ENCODE measurements at regions of chr11 and their contacts with region 1.

Region 1: GRCh38 chr11:71086675-71087258 is 165.6 kb downstream of the SHANK2 start:
- DNase-seq: peak; percentile 76
- ATAC-seq: peak; percentile 93
- H3K4me3 Mint-ChIP-seq: no peak overlapping the region
- H3K27ac Mint-ChIP-seq: peak overlapping the region; percentile 45; the same call in 1 of the 2 replicates
- H3K4me1 Mint-ChIP-seq: no peaks in the 10 kb centered on the region
- H3K27me3 Mint-ChIP-seq: no peaks in the 10 kb centered on the region
- CTCF ChIP-seq: no peak; the same call in 1 of the 2 replicates

Region 2: GRCh38 chr11:71170676-71171423 is 84.1 kb after region 1 on chr11:
- CTCF ChIA-PET with region 1: no interaction called
- POLR2A ChIA-PET with region 1: no interaction called
- DNase-seq: no peak
- ATAC-seq: no peak
- H3K4me3 Mint-ChIP-seq: no peak overlapping the region
- H3K27ac Mint-ChIP-seq: no peak overlapping the region; the same call in 1 of the 2 replicates
- H3K4me1 Mint-ChIP-seq: peaks cover 34% of the 10 kb centered on the region
- H3K27me3 Mint-ChIP-seq: no peaks in the 10 kb centered on the region
- CTCF ChIP-seq: no peak

Region 3: DNA sequence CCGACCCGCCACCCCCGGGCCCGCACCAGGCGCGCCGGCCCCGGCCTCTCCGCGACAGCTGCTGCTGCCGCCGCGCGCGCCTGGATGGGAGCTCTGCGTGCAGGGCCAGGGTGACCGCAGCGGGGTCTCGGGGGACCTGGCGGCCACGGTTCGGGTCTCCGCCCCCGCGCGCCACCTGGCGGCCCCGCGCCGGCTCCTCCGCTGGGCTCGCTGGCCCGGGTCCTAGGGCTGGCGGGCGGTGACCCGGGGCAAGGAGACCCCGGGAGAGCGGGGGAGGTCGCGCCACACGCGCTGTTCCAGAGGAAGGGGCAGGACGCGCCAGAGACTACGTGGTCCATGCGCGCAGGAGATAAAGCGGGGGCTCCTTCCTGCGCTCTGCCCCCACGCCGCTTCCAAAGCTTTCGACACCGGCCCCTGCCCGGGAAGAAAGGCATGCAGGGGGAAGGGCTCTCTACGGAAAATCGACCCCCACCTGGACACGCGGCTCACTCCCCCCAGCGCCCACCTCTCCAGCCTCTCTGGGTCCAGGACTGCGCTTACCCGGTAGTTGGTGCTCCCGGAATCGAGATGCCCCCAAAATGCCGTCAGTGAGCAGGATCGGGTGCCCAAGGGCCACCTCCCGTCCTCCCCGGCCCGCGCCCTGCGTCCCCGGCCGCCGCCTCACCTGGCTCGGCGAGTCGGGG is 165.1 kb after region 1 on chr11:
- CTCF ChIA-PET with region 1: interaction called, 24 read pairs
- POLR2A ChIA-PET with region 1: no interaction called
- DNase-seq: peak; percentile 72
- ATAC-seq: peak; percentile 25
- H3K4me3 Mint-ChIP-seq: peak overlapping the region; percentile 73
- H3K27ac Mint-ChIP-seq: no peak overlapping the region
- H3K4me1 Mint-ChIP-seq: peaks cover 73% of the 10 kb centered on the region
- H3K27me3 Mint-ChIP-seq: no peaks in the 10 kb centered on the region; the same call in 1 of the 2 replicates
- CTCF ChIP-seq: peak; percentile 47; the same call in 1 of the 2 replicates

Region 4: GRCh38 chr11:71372693-71373657 is 286.2 kb after region 1 on chr11:
- CTCF ChIA-PET with region 1: interaction called, 20 read pairs
- POLR2A ChIA-PET with region 1: no interaction called
- DNase-seq: no peak
- ATAC-seq: peak; percentile 57
- H3K4me3 Mint-ChIP-seq: no peak overlapping the region
- H3K27ac Mint-ChIP-seq: 0 out of 2 replicates have a peak overlapping the region, but pooled peaks have one; percentile 42
- H3K4me1 Mint-ChIP-seq: peaks cover 23% of the 10 kb centered on the region
- H3K27me3 Mint-ChIP-seq: peaks cover 33% of the 10 kb centered on the region
- CTCF ChIP-seq: no peak

Region 5: DNA sequence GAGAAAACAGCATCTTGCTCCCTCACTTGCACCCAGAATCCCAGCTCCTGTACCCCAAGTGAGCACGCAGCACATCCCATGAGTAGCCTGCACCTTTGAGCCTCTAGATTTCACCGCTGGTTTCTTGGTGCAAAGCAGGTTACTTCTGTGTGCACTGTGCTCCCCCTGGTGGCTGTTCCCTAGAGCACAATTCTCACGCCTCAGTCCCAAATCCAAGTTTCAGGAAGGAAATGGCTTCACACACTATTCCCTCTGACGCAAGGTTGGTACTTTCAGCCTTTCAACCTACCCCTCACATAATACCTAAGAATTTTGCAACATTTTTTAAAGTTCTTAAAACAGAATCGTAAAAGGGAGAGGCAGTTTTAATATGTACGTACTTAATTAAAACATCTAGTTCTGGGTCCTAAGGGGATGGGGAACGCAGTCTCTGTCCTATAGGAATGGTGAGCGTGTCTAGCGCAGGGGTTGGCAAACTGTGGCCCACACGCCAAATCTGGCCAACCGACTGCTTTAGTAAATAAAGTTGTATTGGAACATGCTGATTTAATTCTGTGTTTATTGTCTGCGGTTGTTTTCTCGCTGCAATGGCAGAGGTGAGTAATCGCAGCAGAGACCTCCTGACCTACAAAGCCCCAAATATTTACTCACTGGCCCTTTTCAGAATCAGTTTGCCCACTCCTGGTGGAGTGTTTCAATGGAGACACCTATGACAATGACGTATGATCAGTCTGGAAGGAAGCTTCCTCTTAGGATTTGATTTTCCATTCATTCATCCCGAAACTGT is 333.9 kb after region 1 on chr11:
- CTCF ChIA-PET with region 1: interaction called, 24 read pairs
- POLR2A ChIA-PET with region 1: no interaction called
- DNase-seq: peak; percentile 74
- ATAC-seq: peak; percentile 83
- H3K4me3 Mint-ChIP-seq: no peak overlapping the region
- H3K27ac Mint-ChIP-seq: no peak overlapping the region
- H3K4me1 Mint-ChIP-seq: no peaks in the 10 kb centered on the region
- H3K27me3 Mint-ChIP-seq: peaks cover 3% of the 10 kb centered on the region; the same call in 1 of the 2 replicates
- CTCF ChIP-seq: peak; percentile 89

Region 6: DNA sequence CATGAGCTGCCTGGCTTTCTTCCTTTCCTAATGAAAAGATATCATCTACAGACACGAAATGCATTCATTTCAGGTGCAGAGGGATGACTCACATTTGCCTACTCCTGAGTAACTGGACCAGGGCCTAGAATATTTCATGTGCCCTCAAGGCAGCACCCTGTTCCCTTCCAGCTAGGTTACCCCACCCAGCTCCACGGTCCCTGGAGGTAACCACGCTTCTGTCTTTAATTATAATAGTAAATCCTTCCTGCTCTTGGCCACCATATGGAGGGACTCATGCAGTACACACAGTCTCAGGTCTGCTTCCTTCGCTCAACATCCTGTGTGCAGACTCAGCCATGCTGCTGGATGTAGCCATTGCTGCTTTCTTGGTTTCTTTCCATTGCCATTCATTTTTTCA is 339.1 kb after region 1 on chr11:
- CTCF ChIA-PET with region 1: interaction called, 10 read pairs
- POLR2A ChIA-PET with region 1: no interaction called
- DNase-seq: no peak
- ATAC-seq: no peak
- H3K4me3 Mint-ChIP-seq: no peak overlapping the region
- H3K27ac Mint-ChIP-seq: no peak overlapping the region
- H3K4me1 Mint-ChIP-seq: 0 out of 2 replicates have a peak, but pooled peaks cover 3% of the 10 kb centered on the region
- H3K27me3 Mint-ChIP-seq: no peaks in the 10 kb centered on the region; the same call in 1 of the 2 replicates
- CTCF ChIP-seq: no peak